ENCODE measurements at regions of chr3 and their contacts with region 1.

Region 1: DNA sequence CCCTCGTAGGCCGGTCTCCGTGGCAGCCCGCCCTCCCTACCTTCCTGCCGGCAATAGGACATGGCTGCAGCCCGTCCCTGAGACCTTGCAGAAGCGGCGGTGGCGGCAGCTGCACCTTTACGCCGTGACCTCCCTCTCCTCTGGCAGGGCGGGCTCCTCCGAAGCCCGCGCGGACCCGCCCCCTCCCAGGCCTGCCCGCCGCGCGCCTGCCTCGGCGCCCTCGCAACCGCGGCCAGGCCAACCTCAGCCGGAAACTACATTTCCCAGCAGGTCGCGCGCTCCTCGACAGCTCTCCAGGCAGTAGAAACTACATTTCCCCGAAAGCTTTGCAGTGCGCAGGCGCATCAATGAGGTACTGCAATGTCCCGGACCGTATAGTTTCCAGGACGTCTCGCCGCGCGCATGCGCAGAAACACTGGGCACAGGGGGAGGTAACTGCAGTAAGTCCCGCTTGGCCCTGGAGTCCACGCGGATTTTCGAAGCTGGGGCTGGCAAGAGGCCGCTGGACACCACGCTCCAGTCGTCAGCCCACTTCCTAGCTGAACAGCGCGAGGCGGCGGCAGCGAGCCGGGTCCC is at the starts of genes CHCHD4 and TMEM43:
- DNase-seq: peak; percentile 100
- H3K4me3 ChIP-seq: peak within 1 kb of the TSS; percentile 68 to 94 (median 82)
- H3K27ac ChIP-seq: peak within 1 kb of the TSS; percentile 96 to 99 (median 96)
- H3K4me1 ChIP-seq: peaks cover 37 to 55% (median 43%) of the 10 kb centered on the region in 4 donors
- H3K27me3 ChIP-seq: no peaks in the 10 kb centered on the region
- CTCF ChIP-seq: peak in 1 of 3 experiments; percentile 23
- EP300 ChIP-seq: no peak
- POLR2A ChIP-seq: peak; percentile 84
- total RNA-seq, gene CHCHD4: 21.2 to 27.0 (median 24.3) TPM
- total RNA-seq, gene TMEM43: 131 to 208 (median 179) TPM

Region 2: GRCh38 chr3:14178247-14179113 is 53.8 kb after region 1 on chr3 and contains the starts of genes LSM3 and XPC:
- intact Hi-C with region 1: loop called (anchors 2 kb)
- DNase-seq: peak; percentile 99
- H3K4me3 ChIP-seq: peak within 1 kb of the TSS; percentile 65 to 96 (median 77)
- H3K27ac ChIP-seq: peak within 1 kb of the TSS; percentile 89 to 98 (median 96)
- H3K4me1 ChIP-seq: peaks cover 23 to 58% (median 41%) of the 10 kb centered on the region in 4 donors
- H3K27me3 ChIP-seq: no peaks in the 10 kb centered on the region
- CTCF ChIP-seq: no peak
- EP300 ChIP-seq: no peak
- POLR2A ChIP-seq: peak; percentile 82
- total RNA-seq, gene LSM3: 8.0 to 12.0 (median 9.6) TPM
- total RNA-seq, gene XPC: 28.9 to 41.9 (median 37.8) TPM

Region 3: GRCh38 chr3:14890476-14890875 is 765.8 kb after region 1 on chr3:
- intact Hi-C with region 1: no loop called
- DNase-seq: no peak
- H3K4me3 ChIP-seq: no peak overlapping the region
- H3K27ac ChIP-seq: no peak overlapping the region
- H3K4me1 ChIP-seq: peaks cover 0 to 12% (median 7%) of the 10 kb centered on the region in 4 donors
- H3K27me3 ChIP-seq: peaks cover 0 to 7% (median 0%) of the 10 kb centered on the region in 4 donors
- CTCF ChIP-seq: no peak
- EP300 ChIP-seq: no peak
- POLR2A ChIP-seq: no peak